Esophagus squamous epithelium (tissue), 5 donors: ENCODE measurements at regions of chr13 and their contacts with region 1.

Region 1: GRCh38 chr13:31424117-31424729 is 224.4 kb downstream of the B3GLCT start:
- DNase-seq: peak; percentile 9
- H3K4me3 ChIP-seq: no peak overlapping the region
- H3K27ac ChIP-seq: peak overlapping the region in 1 of 4 donors; percentile 49
- H3K4me1 ChIP-seq: peaks cover 0 to 10% (median 0%) of the 10 kb centered on the region in 3 donors
- H3K27me3 ChIP-seq: no peaks in the 10 kb centered on the region
- CTCF ChIP-seq: peak; percentile 51 to 86 (median 79)
- POLR2A ChIP-seq: no peak

Region 2: DNA sequence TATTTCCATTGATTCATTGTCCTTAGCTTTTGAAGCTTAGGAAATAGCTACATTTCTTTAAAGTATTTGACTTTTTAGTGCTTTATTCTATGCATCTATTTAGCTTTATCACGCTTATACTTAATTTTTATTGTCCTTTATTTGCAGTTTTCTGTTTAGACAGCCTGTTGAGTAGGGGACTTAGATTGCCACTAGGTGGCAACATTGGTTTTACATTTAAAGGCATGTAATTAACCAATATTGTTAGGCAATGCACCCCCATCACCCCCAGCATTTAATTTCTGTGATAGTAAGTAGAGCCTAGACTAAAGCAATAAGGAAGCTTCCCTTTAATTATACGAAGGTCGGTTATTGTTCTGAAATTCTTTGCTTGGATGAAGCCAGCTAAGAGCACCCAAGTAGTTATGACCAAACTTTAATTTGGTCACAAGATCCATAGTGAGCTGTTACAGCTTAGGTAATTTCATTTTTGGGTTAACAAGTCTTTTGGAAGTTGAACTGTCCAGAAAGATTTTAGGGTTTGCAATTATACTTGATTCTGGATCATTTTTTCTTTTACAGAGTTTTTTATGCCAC is 187.9 kb before region 1 on chr13:
- intact Hi-C with region 1: loop called (anchors 5 kb)
- DNase-seq: no peak
- H3K4me3 ChIP-seq: no peak overlapping the region
- H3K27ac ChIP-seq: no peak overlapping the region
- H3K4me1 ChIP-seq: no peaks in the 10 kb centered on the region
- H3K27me3 ChIP-seq: no peaks in the 10 kb centered on the region
- CTCF ChIP-seq: peak; percentile 36 to 76 (median 64)
- POLR2A ChIP-seq: no peak